T-cell (primary cell): ENCODE measurements at regions of chr1 and their contacts with region 1.

Region 1: GRCh38 chr1:21270086-21270689 is 20.1 kb downstream of the ECE1 start:
- DNase-seq: peak; percentile 56 to 87 (median 78)
- ATAC-seq: peak; percentile 84 to 91 (median 89)
- H3K4me3 ChIP-seq: no peak overlapping the region
- H3K4me3 Mint-ChIP-seq: peak overlapping the region in 1 of 3 donors; percentile 19
- H3K27ac ChIP-seq: no peak overlapping the region
- H3K27ac Mint-ChIP-seq: peak overlapping the region; percentile 71 to 78
- H3K4me1 ChIP-seq: peaks cover 0 to 17% of the 10 kb centered on the region in 2 experiments
- H3K4me1 Mint-ChIP-seq: peaks cover 24 to 28% (median 28%) of the 10 kb centered on the region in 3 donors
- H3K27me3 ChIP-seq: no peaks in the 10 kb centered on the region
- H3K27me3 Mint-ChIP-seq: no peaks in the 10 kb centered on the region

Region 2: DNA sequence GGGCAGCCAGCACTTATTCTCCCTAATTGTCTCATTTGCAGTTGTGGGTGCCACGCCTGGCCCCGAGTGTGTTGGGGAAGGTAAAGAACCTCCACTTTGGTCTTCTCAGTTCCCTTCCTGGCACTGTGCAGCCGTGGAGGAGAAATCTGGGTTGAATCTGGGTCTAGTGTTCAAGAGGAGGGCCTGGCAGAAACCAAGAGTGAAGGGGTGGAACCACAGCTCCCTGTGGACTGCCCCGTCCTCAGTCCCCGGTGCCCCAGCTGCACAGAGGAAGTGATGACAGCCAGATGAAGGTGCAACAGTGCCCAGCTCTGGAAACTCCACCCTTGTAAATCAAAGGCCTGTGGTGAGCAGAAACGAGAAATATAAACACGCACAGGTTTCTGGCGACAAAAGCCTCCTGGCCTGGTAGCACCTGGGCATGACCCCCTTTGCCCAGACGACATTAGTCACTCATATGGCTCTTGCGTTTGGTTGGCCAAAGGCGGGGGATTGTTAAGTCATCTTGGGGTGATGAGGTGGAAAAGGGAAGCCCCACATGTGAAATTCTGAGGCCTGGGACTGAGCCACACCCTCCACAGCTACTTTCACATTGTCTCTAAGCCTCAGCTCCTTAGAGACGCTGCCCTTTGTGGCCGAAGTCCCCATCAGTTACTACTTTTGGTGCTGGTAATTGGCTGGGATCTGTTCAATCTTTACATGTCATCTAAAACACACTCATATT is 24.2 kb after region 1 on chr1:
- CTCF ChIA-PET with region 1: interaction called, 3 to 17 read pairs
- POLR2A ChIA-PET with region 1: no interaction called
- DNase-seq: peak; percentile 69 to 95 (median 88)
- ATAC-seq: peak; percentile 79 to 83 (median 80)
- H3K4me3 ChIP-seq: peak overlapping the region; percentile 48 to 76
- H3K4me3 Mint-ChIP-seq: peak overlapping the region; percentile 80 to 90 (median 88)
- H3K27ac ChIP-seq: peak overlapping the region; percentile 100
- H3K27ac Mint-ChIP-seq: peak overlapping the region; percentile 98 to 99
- H3K4me1 ChIP-seq: peaks cover 45 to 94% of the 10 kb centered on the region in 2 experiments
- H3K4me1 Mint-ChIP-seq: peaks cover 83 to 90% (median 86%) of the 10 kb centered on the region in 3 donors
- H3K27me3 ChIP-seq: no peaks in the 10 kb centered on the region
- H3K27me3 Mint-ChIP-seq: no peaks in the 10 kb centered on the region

Region 3: GRCh38 chr1:21368515-21369289 is 98.5 kb after region 1 on chr1:
- CTCF ChIA-PET with region 1: interaction called, 4 to 10 read pairs
- POLR2A ChIA-PET with region 1: no interaction called
- DNase-seq: peak; percentile 13 to 81 (median 51)
- ATAC-seq: peak; percentile 63 to 76 (median 69)
- H3K4me3 ChIP-seq: no peak overlapping the region
- H3K4me3 Mint-ChIP-seq: no peak overlapping the region
- H3K27ac ChIP-seq: no peak overlapping the region
- H3K27ac Mint-ChIP-seq: no peak overlapping the region
- H3K4me1 ChIP-seq: peaks cover 0 to 8% of the 10 kb centered on the region in 2 experiments
- H3K4me1 Mint-ChIP-seq: peaks cover 10 to 17% (median 12%) of the 10 kb centered on the region in 3 donors
- H3K27me3 ChIP-seq: peaks cover 0 to 2% of the 10 kb centered on the region in 2 experiments
- H3K27me3 Mint-ChIP-seq: no peaks in the 10 kb centered on the region